Activated CD4-positive, alpha-beta T cell treated with anti-CD3 and anti-CD28 coated beads, Interleukin-2, amount 10 ng/mL, durations not matched to agents 24 days and 14 days (primary cell): ENCODE measurements at regions of chr11 and their contacts with region 1.

Region 1: DNA sequence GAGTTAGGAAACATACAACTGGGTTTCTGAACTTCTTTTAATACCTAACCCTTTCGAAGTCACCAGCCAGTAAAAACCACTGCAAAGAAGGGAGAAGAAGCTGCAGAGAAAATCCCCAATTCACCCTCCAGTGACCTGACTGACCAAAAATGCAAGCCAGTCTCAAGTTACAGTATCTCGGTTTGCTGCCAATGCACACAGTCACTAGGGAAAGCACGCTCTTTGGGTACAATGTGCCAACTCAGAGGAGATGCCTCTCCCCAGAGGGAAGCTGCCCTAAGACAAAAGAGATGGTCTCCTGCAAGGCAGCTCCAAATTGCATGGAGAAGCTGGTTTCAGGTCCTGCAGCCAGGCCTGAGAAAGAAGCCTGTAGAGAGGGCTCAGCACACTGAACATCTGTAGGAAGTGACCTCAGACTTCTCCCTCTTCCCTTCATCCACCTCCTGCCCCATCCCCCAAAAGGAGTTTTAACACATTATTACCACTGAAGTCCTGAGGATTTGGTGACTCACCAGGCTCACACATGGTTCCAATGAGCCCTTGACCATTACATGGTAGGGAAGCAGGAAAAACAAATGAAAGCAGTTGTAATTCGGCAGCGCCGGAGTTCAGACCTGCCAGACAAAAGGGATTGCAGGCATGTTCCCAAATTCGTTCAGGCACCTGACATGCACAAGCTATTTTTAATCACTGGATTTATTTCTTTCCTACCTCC is 90.1 kb downstream of the ETS1 start:
- DNase-seq: peak; percentile 77
- H3K4me3 Mint-ChIP-seq: peak overlapping the region; percentile 82
- H3K27ac Mint-ChIP-seq: peak overlapping the region; percentile 96
- H3K4me1 Mint-ChIP-seq: peaks cover 92% of the 10 kb centered on the region
- H3K27me3 Mint-ChIP-seq: no peaks in the 10 kb centered on the region

Region 2: DNA sequence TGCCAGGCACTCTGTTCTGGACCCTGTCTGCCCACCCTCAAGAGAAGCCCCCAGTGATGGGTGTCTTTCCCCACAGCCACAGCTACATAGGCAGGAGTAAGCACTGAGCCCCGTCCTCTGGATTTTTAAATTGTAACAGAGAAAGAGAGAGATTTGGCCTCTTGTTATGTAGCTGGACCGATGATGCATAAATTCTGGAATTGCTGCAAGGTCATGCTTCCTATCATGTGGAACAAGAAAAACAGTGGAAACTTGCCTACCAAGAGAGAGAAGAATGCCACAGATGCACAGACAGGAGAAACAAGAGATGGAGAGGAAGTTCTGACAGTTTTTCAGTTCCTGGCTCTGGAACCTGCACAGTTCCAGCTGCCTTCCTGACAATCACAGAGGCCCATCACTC is 60.1 kb before region 1 on chr11:
- intact Hi-C with region 1: no loop called
- DNase-seq: peak; percentile 44
- H3K4me3 Mint-ChIP-seq: no peak overlapping the region
- H3K27ac Mint-ChIP-seq: no peak overlapping the region
- H3K4me1 Mint-ChIP-seq: peaks cover 11% of the 10 kb centered on the region
- H3K27me3 Mint-ChIP-seq: no peaks in the 10 kb centered on the region

Region 3: GRCh38 chr11:128482512-128483191 is 14.6 kb before region 1 on chr11:
- intact Hi-C with region 1: loop called (anchors 1 kb)
- DNase-seq: peak; percentile 86
- H3K4me3 Mint-ChIP-seq: peak overlapping the region; percentile 85
- H3K27ac Mint-ChIP-seq: peak overlapping the region; percentile 96
- H3K4me1 Mint-ChIP-seq: peaks cover 91% of the 10 kb centered on the region
- H3K27me3 Mint-ChIP-seq: no peaks in the 10 kb centered on the region

Region 4: DNA sequence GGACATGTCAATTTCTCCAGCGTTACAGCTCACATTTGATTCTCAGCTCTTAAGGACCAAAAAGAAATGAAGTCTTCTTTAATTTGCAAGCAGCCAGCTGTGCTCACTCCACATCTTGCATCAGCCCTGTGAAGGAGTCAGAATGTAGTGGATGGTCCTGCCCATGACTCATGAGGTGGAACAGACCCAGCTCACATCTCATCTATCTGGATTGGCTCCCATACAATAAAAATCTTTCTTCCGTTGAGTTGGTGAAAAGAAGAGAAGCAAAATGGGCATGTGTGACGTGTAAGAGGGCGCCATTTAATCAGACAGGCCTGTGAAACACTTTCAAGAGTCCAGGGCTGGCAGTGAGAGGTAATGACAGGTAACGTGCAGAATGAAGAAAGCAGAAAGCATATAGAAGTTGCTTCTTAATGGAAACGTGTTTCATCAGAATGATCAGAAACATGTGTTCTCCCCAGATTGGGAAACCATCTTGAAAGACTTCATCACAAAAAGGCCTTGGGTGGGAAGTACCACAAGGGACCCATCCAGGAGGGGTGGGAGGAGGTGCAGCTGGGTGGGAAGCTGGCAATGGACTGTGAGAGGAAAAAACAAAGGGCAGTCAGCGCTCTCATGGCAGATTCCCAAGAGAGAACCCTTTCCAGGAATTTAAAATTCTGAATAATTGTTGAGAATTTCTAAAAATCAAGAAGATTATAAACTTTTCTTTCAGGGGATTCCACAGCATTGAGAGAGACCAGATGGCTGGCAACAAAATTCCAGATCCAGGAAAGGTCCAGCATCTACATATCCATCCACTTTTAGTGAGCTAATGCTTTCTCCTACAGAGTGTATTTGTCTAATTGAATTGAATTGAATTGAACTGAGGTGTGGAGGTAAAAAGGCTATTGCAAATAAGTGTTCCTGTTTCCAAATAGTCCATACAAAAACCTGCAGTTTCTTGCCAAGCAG is 33.2 kb after region 1 on chr11:
- intact Hi-C with region 1: no loop called
- DNase-seq: peak; percentile 52
- H3K4me3 Mint-ChIP-seq: no peak overlapping the region
- H3K27ac Mint-ChIP-seq: no peak overlapping the region
- H3K4me1 Mint-ChIP-seq: peaks cover 42% of the 10 kb centered on the region
- H3K27me3 Mint-ChIP-seq: no peaks in the 10 kb centered on the region

Region 5: GRCh38 chr11:128642571-128642970 is 145.4 kb after region 1 on chr11:
- intact Hi-C with region 1: no loop called
- DNase-seq: no peak
- H3K4me3 Mint-ChIP-seq: no peak overlapping the region
- H3K27ac Mint-ChIP-seq: no peak overlapping the region
- H3K4me1 Mint-ChIP-seq: peaks cover 4% of the 10 kb centered on the region
- H3K27me3 Mint-ChIP-seq: peaks cover 42% of the 10 kb centered on the region